ENCODE measurements at regions of chr15 and their contacts with region 1.

Region 1: GRCh38 chr15:52256366-52256765 is 39.2 kb downstream of the MYO5C start:
- DNase-seq: peak; percentile 87
- H3K4me3 Mint-ChIP-seq: peak overlapping the region; percentile 25
- H3K27ac Mint-ChIP-seq: peak overlapping the region; percentile 63
- H3K4me1 Mint-ChIP-seq: peaks cover 64% of the 10 kb centered on the region
- H3K27me3 Mint-ChIP-seq: no peaks in the 10 kb centered on the region

Region 2: GRCh38 chr15:52735231-52736089 is 479.1 kb after region 1 on chr15:
- CTCF ChIA-PET with region 1: interaction called, 31 read pairs
- POLR2A ChIA-PET with region 1: no interaction called
- DNase-seq: peak; percentile 85
- H3K4me3 Mint-ChIP-seq: no peak overlapping the region
- H3K27ac Mint-ChIP-seq: no peak overlapping the region
- H3K4me1 Mint-ChIP-seq: peaks cover 22% of the 10 kb centered on the region
- H3K27me3 Mint-ChIP-seq: peaks cover 6% of the 10 kb centered on the region